ENCODE measurements at regions of chr6 and their contacts with region 1.

Region 1: DNA sequence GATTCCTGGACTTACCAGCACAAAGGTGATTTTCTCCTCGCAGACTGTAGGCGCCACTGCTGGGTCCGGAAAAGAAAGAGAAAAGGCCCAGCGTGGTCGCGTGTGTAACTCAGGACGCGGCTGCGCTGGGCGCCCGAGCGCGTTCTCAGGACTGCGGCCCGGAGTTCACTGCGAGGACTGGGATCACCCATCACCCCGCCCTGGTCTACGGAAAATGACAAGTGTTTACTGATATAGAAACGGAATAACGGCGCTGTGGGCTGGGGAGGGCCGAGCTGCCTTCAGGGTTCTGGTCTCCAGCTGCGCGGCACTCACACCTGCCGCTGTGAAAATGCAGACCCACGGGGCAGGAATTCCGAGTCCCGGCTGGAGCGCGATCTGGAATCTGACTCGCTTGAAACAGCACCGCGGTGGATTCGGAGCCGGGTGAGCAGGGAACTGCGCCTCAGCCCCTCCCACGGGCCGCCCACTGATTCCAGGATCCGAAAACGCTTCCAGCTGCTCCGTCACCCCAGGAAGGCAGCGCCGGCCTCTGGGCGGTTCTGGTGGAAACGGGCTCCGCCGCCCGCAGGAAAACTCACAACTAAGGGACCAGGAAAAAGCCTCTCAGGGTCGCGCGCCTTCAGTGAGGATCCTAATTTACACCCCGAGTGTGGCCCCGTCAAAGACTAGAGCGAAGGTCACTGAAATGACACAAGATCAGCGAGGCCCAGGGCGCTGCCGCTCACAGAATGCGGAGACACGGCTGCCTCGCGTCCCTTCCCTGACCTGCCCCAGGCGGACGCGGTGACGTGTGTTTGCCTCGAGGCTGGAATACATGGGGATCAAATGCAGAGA is 34.5 kb downstream of the HLA-A start:
- DNase-seq: peak; percentile 46 to 79
- ATAC-seq: peak; percentile 79 to 84 (median 84)
- H3K4me3 ChIP-seq: peak overlapping the region; percentile 40
- H3K4me3 Mint-ChIP-seq: peak overlapping the region; percentile 94
- H3K27ac ChIP-seq: no peak overlapping the region
- H3K27ac Mint-ChIP-seq: peak overlapping the region in 1 of 2 donors; percentile 84
- H3K4me1 ChIP-seq: peaks cover 35% of the 10 kb centered on the region
- H3K4me1 Mint-ChIP-seq: peaks cover 44 to 48% of the 10 kb centered on the region in 2 donors
- H3K27me3 ChIP-seq: peaks cover 33% of the 10 kb centered on the region
- H3K27me3 Mint-ChIP-seq: peaks cover 42 to 51% of the 10 kb centered on the region in 2 donors
- CTCF ChIP-seq: no peak

Region 2: GRCh38 chr6:29797135-29797534 is 179.7 kb before region 1 on chr6:
- intact Hi-C with region 1: no loop called
- DNase-seq: no peak
- ATAC-seq: no peak
- H3K4me3 ChIP-seq: no peak overlapping the region
- H3K4me3 Mint-ChIP-seq: no peak overlapping the region
- H3K27ac ChIP-seq: no peak overlapping the region
- H3K27ac Mint-ChIP-seq: no peak overlapping the region
- H3K4me1 ChIP-seq: peaks cover 12% of the 10 kb centered on the region
- H3K4me1 Mint-ChIP-seq: peaks cover 9 to 12% of the 10 kb centered on the region in 2 donors
- H3K27me3 ChIP-seq: peaks cover 19% of the 10 kb centered on the region
- H3K27me3 Mint-ChIP-seq: peaks cover 33 to 50% of the 10 kb centered on the region in 2 donors
- CTCF ChIP-seq: no peak

Region 3: GRCh38 chr6:29926413-29927274 is 50.2 kb before region 1 on chr6:
- intact Hi-C with region 1: loop called (anchors 2 kb)
- DNase-seq: peak; percentile 76 to 92
- ATAC-seq: peak; percentile 86 to 95 (median 88)
- H3K4me3 ChIP-seq: peak overlapping the region; percentile 86
- H3K4me3 Mint-ChIP-seq: peak overlapping the region; percentile 88
- H3K27ac ChIP-seq: peak overlapping the region; percentile 98
- H3K27ac Mint-ChIP-seq: peak overlapping the region; percentile 90 to 91
- H3K4me1 ChIP-seq: peaks cover 17% of the 10 kb centered on the region
- H3K4me1 Mint-ChIP-seq: peaks cover 6 to 28% of the 10 kb centered on the region in 2 donors
- H3K27me3 ChIP-seq: no peaks in the 10 kb centered on the region
- H3K27me3 Mint-ChIP-seq: no peaks in the 10 kb centered on the region
- CTCF ChIP-seq: no peak

Region 4: DNA sequence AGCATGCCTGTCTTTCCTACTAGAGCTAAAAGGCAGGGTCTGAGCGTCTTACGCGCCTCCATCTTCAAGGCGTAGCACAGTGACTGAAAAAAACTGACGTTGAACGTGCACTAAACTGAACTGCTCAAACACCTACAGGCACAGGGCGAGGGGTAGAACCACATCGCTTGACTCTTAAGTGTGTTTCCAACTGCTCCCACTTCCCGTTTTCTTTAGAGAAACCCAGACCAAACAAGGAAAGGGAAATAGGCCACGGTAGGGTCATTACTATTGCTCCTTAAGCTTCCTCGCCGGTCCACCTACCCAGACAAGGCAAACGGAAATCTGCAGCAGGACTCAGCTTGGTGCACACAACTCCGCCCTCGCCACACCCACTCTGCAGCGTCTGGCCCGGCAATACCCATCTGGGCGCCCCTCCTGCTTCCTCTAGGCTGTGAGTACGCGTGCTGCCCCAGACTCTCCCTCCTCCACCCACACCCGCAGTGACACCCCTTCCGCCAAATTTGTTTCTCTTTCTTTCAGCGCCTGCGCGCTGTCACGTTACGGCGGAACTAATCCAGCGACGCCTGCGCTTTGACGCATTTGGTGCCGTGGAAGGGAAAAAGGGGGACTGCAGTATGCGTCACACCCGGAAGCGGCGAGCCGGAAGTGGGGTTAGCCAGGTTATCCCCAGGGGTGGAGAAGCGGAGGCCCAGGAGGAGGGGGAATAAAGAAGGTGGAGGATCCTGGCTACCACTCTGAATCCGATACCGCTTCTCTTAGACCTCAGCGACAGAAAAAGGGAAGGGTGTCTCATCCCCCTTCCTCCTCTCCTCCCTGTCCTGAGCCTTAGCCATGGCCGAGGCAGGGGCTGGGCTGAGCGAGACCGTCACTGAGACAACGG is 90.0 kb after region 1 on chr6 and contains the start of gene PPP1R11:
- intact Hi-C with region 1: no loop called
- DNase-seq: peak; percentile 97 to 99
- ATAC-seq: peak; percentile 94 to 100 (median 95)
- H3K4me3 ChIP-seq: peak within 1 kb of the TSS; percentile 87
- H3K4me3 Mint-ChIP-seq: peak within 1 kb of the TSS; percentile 98
- H3K27ac ChIP-seq: peak within 1 kb of the TSS; percentile 99
- H3K27ac Mint-ChIP-seq: peak within 1 kb of the TSS; percentile 98 to 100
- H3K4me1 ChIP-seq: peaks cover 34% of the 10 kb centered on the region
- H3K4me1 Mint-ChIP-seq: peaks cover 49 to 64% of the 10 kb centered on the region in 2 donors
- H3K27me3 ChIP-seq: peaks cover 3% of the 10 kb centered on the region
- H3K27me3 Mint-ChIP-seq: peaks cover 6 to 12% of the 10 kb centered on the region in 2 donors
- CTCF ChIP-seq: no peak
- total RNA-seq, gene PPP1R11: 52.9 to 75.3 (median 61.1) TPM